A673 (cell line): ENCODE measurements at regions of chr10 and their contacts with region 1.

Region 1: DNA sequence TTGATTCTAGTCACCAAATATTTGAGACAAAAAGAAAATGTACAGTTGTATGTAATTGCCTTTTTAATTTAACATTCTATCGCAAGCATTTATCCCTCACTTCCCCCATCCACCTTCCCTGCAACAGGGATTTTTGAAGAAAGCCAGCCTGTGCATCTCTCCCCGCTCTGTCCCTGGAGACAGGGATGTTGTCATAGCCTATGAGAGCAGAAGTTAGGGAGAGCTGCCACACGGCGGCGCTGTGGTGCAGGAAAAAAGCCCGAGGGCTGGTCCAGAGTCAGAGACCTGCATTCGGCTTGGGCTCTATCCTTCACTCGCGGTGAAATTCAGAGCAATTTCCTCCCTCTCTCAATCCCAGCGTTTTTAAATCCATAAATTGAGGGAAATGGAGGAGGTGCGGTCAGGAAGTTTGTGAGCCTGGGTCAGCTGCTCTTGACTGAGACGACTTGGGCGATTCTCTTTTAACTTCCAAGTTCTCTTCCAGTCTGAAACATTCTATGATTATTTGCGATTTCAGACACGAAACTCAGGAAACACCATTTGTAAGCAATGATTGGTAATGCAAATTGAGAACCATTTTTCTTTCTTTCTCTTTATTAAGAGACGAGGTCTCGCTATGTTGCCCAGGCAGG is 17.5 kb downstream of the HKDC1 start:
- DNase-seq: peak; percentile 91
- H3K4me3 ChIP-seq: no peak overlapping the region
- H3K27ac ChIP-seq: no peak overlapping the region
- H3K4me1 ChIP-seq: peaks cover 10% of the 10 kb centered on the region
- H3K27me3 ChIP-seq: no peaks in the 10 kb centered on the region
- CTCF ChIP-seq: peak; percentile 93

Region 2: GRCh38 chr10:69360485-69361324 is 123.1 kb after region 1 on chr10:
- CTCF ChIA-PET with region 1: interaction called, 10 read pairs
- POLR2A ChIA-PET with region 1: no interaction called
- intact Hi-C with region 1: no loop called
- DNase-seq: no peak
- H3K4me3 ChIP-seq: no peak overlapping the region
- H3K27ac ChIP-seq: no peak overlapping the region
- H3K4me1 ChIP-seq: no peaks in the 10 kb centered on the region
- H3K27me3 ChIP-seq: no peaks in the 10 kb centered on the region
- CTCF ChIP-seq: no peak

Region 3: DNA sequence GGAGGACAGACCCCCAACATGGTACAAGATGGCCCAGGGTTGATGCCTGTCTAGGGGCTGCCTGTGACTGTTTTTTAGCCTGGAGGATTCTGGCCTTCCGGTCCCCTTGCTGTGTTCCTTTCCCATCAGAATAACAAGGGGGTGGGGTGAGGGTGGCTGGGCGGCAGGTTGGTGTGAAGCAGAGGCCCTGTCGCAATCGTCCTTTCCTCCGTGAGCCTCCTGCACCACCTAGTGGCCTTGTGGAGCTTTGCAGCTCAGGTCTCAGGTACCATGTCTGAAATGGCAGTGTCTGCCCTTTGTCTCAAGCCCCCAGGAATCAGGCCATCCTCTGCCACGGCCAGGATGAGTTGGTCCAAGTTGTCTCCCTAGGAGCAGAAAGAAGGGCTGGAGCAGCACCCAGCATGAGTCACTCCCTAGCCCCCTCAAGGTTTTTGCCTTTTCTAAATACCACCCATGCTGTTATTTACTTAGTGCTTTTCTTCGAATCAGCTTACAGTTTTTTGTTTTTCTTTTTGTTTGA is 154.9 kb after region 1 on chr10:
- CTCF ChIA-PET with region 1: interaction called, 16 read pairs
- POLR2A ChIA-PET with region 1: no interaction called
- intact Hi-C with region 1: loop called (anchors 1 kb)
- DNase-seq: peak; percentile 91
- H3K4me3 ChIP-seq: no peak overlapping the region
- H3K27ac ChIP-seq: no peak overlapping the region
- H3K4me1 ChIP-seq: peaks cover 24% of the 10 kb centered on the region
- H3K27me3 ChIP-seq: no peaks in the 10 kb centered on the region
- CTCF ChIP-seq: peak; percentile 92

Region 4: DNA sequence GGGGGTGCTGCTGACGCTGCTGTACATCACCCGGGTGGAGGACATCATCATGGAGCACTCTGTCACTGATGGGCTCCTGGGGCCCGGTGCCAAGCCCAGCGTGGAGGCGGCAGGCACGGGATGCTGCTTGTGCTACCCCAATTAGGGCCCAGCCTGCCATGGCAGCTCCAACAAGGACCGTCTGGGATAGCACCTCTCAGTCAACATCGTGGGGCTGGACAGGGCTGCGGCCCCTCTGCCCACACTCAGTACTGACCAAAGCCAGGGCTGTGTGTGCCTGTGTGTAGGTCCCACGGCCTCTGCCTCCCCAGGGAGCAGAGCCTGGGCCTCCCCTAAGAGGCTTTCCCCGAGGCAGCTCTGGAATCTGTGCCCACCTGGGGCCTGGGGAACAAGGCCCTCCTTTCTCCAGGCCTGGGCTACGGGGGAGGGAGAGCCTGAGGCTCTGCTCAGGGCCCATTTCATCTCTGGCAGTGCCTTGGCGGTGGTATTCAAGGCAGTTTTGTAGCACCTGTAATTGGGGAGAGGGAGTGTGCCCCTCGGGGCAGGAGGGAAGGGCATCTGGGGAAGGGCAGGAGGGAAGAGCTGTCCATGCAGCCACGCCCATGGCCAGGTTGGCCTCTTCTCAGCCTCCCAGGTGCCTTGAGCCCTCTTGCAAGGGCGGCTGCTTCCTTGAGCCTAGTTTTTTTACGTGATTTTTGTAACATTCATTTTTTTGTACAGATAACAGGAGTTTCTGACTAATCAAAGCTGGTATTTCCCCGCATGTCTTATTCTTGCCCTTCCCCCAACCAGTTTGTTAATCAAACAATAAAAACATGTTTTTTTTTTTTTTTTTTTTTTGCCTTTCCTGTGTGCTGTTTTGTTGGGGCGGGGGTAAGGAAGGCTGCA is 269.4 kb after region 1 on chr10:
- CTCF ChIA-PET with region 1: no interaction called
- POLR2A ChIA-PET with region 1: no interaction called
- intact Hi-C with region 1: loop called (anchors 1 kb)
- DNase-seq: no peak
- H3K4me3 ChIP-seq: peak overlapping the region; percentile 29
- H3K27ac ChIP-seq: no peak overlapping the region
- H3K4me1 ChIP-seq: no peaks in the 10 kb centered on the region
- H3K27me3 ChIP-seq: peaks cover 8% of the 10 kb centered on the region
- CTCF ChIP-seq: no peak